ENCODE measurements at regions of chr11 and their contacts with region 1.

Region 1: DNA sequence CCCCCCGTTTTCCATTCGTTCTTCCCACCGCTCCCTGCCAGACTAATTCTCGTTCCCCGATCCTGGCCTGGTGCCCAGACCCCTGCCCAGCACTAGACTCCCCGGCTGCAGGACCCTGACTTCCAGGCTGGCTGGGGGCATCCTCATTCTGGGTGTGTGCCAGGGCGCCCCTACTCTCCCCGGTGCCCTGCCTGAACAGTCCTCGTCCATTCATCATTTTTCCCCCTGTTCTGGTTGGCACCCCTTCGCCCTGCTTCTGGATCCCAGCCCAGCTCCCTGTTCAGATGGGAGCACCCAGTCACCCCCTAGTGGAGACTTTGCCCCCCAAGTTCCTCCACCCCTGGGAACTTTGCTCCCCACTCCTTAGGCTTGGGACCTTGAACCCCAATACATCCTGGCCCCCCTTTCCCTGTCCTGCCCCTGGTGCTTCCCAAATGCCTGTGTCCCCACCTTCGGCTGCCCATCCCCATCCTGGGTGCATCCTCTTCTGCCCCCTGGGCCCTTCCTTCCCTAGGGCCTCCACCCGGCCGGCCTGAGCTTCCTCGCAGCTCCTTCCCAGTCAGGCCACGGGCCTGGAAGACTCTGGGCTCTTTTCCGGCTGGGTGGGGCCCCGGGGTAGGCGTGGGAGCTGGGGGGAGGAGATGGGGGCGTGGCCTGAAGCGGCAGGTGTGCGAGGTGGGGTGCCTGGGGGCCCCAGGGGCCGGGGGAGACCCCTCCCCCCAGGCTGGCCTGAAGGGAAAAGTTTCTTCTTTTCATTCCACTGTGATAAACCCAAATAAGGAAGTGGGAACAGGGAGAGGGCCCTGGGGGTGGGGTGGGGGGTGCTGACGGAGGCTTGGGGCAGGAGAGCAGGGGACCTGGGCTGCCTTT is 908 bp downstream of the PLCB3 start:
- DNase-seq: no peak
- H3K4me3 ChIP-seq: peak overlapping the region; percentile 79
- H3K27me3 ChIP-seq: no peaks in the 10 kb centered on the region
- CTCF ChIP-seq: peak; percentile 56

Region 2: DNA sequence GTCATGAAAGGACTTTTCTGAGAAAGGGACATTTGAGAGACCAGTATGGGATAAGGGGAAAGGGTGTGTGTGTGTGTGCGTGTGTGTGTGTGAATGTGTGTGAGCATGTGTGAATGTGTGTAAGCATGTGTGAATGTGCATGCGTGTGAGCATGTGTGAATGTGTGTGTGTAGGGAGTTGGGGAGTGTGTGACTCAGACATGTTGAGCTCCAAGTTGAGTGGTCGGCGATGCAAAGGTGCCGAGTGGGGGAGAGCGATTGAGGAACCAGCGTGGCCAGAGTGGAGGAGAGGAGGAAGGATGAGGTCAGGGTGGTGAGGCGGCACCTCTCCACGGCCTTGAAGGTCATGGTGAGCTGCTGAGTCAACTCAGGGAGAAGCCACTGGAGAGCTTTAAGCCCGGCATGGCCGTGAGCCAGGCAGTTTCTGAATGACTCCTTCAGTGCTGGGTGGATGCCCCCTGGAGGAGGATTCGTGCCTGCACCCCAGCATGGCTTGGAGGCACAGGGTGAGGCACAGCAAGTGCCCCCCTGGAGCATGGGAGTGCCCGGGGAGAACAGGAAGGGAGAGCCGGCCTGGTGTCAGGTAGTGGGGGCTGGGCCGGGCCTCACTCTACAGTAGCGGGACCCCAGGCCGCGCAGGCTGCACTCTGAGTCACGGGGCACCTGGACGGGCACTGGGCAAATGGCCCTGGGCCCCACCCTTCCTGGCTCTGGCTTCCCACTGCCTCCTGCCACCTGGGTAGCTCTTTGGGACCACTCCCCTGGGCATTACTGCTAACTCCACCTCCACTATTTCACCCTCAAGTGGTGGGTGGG is 79.5 kb after region 1 on chr11:
- CTCF ChIA-PET with region 1: interaction called, 3 read pairs
- POLR2A ChIA-PET with region 1: interaction called, 14 read pairs
- DNase-seq: no peak
- H3K4me3 ChIP-seq: no peak overlapping the region
- H3K27me3 ChIP-seq: no peaks in the 10 kb centered on the region
- CTCF ChIP-seq: peak; percentile 81